Mammary epithelial cell (primary cell): ENCODE measurements at regions of chr11 and their contacts with region 1.

Region 1: GRCh38 chr11:66480117-66480938 is at the start of gene DPP3:
- DNase-seq: peak; percentile 97
- H3K4me3 ChIP-seq: peak within 1 kb of the TSS; percentile 52 to 75 (median 68)
- H3K27ac ChIP-seq: peak within 1 kb of the TSS; percentile 83
- H3K4me1 ChIP-seq: peaks cover 10% of the 10 kb centered on the region
- H3K27me3 ChIP-seq: no peaks in the 10 kb centered on the region
- CTCF ChIP-seq: no peak
- total RNA-seq, gene DPP3: 54.3 to 59.8 TPM

Region 2: DNA sequence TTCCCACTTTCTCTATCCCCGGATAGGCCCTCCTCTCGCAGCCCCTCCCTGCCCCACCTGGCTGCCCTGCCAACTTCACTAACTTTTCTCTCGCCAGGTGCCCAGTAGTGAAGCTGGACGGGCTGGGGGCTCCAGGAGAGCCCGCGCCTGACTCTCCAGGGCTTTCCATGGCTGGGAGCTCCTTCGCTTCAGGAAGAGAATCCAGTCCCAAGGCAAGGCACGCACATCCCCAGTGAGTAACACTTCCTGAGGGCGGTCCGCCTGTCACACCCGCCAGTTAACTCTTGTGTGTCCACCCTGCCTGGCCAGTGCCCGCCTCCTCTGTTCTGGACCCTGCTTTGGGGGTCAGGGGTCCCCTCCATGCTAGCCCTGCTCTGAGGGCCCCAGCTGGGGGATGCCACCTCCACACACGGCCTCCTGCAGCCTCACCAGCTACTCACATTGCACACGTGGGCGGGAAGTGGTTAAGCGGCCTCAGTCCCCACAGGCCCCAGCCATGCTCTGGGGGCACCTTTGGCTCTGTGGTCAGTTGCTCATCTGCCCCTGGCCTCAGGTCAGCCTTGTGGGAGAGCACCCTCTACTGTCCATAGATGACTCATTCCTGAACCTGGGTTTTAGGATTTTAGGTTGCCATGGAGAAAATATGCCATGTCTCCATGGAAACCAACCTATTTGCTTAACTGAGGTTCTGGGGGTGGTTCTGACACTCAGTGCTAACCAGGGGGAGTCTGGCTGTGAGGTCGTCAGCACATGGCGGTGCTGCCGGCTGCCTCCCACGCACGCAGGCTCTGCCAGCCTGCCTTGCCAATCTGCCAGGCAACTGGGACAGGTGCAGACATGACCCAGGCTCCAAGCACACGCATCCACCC is 143.9 kb before region 1 on chr11 and contains the start of gene RIN1:
- CTCF ChIA-PET with region 1: no interaction called
- dilution Hi-C with region 1: no loop called
- in situ Hi-C with region 1: no loop called
- intact Hi-C with region 1: loop called (anchors 5 kb)
- DNase-seq: peak; percentile 99
- H3K4me3 ChIP-seq: peak within 1 kb of the TSS; percentile 40 to 78 (median 70)
- H3K27ac ChIP-seq: peak within 1 kb of the TSS; percentile 87
- H3K4me1 ChIP-seq: peaks cover 52% of the 10 kb centered on the region
- H3K27me3 ChIP-seq: no peaks in the 10 kb centered on the region
- CTCF ChIP-seq: peak in 1 of 2 donors; percentile 19
- total RNA-seq, gene RIN1: 28.5 to 75.6 TPM

Region 3: DNA sequence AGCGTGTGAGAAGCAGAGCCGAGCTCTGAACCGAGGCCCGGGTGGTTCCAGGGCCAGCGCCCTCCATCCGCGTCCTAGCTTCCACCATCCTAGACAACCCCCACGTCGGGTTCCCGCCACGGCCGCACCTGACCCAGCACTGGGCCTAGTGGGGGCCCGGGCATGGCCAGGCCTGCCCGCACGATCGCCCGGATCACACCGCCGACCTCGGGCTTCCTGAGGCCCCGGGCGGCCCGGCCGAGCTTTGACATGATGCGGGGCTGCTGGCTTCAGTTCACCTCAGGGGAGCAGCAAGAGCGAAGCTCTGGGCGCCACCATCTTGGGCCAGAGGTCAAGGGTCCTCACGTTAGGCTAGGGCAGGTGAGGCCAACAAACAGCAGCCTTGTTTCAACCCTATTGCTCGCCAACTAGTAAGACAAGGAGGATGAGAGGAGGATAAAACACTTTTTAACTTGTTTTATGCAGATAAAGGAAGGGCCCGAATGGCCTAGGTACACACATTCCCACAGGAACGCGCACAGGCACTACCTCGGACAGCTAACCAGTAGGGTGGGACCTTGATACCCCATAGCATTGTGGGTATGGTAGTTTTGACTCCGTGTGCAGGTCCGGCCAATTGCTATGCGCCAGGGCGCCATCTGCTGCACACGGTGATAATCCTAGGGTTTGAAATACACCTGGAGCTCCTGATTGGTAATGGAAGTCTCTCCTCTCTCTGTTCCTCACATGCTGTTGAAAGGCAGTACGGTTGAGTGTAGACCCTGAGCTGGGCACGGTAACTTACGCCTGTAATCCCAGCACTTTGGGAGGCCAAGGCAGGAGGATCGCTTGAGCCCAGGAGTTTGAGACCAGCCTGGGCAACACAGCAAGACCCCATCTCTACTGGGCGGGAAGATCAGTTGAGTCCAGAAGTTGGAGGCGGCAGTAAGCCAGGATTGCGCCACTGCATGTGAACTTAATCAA is 41.5 kb before region 1 on chr11 and contains the start of gene MRPL11:
- CTCF ChIA-PET with region 1: interaction called, 4 read pairs
- dilution Hi-C with region 1: no loop called
- in situ Hi-C with region 1: no loop called
- intact Hi-C with region 1: loop called (anchors 2 kb)
- DNase-seq: peak; percentile 90
- H3K4me3 ChIP-seq: peak within 1 kb of the TSS; percentile 53 to 87 (median 80)
- H3K27ac ChIP-seq: peak within 1 kb of the TSS; percentile 64
- H3K4me1 ChIP-seq: peaks cover 7% of the 10 kb centered on the region
- H3K27me3 ChIP-seq: no peaks in the 10 kb centered on the region
- CTCF ChIP-seq: peak; percentile 60 to 74
- total RNA-seq, gene MRPL11: 19.8 to 47.6 TPM

Region 4: GRCh38 chr11:66510271-66510989 is 30.1 kb after region 1 on chr11 and contains the start of gene BBS1:
- CTCF ChIA-PET with region 1: no interaction called
- dilution Hi-C with region 1: no loop called
- in situ Hi-C with region 1: no loop called
- intact Hi-C with region 1: loop called (anchors 2 kb)
- DNase-seq: peak; percentile 69
- H3K4me3 ChIP-seq: peak within 1 kb of the TSS; percentile 67 to 84 (median 71)
- H3K27ac ChIP-seq: peak within 1 kb of the TSS; percentile 34
- H3K4me1 ChIP-seq: peaks cover 4% of the 10 kb centered on the region
- H3K27me3 ChIP-seq: no peaks in the 10 kb centered on the region
- CTCF ChIP-seq: no peak
- total RNA-seq, gene BBS1: 20.3 to 44.2 TPM

Region 5: DNA sequence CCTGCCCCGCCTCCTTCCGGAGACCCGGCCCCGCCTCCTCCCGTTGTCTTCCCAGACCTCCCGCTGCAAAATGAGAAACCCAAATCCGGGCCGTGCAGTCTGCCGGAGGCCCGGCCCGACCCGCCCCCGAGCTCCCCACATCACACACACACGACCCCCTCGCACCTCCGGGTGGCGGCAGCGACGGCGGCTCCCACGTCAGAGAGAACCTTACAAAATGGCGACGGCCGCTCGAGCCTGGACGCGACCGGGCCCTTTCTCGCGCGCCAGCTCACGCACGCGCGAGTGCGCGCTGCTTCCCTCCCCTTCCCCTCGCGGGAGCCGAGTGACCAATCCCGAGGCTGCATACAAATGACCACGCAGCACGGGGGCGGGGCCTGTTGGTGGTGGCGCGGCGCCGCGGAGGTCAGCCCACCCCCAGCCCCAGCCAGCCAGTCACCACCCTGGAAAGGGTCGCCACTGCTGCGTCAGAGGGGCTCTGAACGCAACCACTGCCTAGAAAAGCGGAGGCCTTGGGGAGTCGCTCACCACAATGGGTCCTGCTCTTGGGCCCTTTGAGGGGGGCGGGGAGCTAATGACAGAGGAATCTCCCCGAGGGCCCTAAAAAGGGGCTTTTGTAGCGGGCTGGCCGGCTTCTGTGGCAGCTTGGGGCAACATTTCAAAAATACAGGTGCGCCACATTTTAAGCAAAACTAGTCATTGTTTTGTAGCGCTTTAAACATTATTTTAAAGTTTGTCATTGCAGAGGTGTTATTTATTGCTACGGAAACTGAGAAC is 197.5 kb after region 1 on chr11 and contains the start of gene RBM4B:
- CTCF ChIA-PET with region 1: interaction called, 4 read pairs
- dilution Hi-C with region 1: no loop called
- in situ Hi-C with region 1: no loop called
- intact Hi-C with region 1: loop called (anchors 1 kb)
- DNase-seq: peak; percentile 89
- H3K4me3 ChIP-seq: peak within 1 kb of the TSS; percentile 51 to 84 (median 75)
- H3K27ac ChIP-seq: peak within 1 kb of the TSS; percentile 93
- H3K4me1 ChIP-seq: peaks cover 18% of the 10 kb centered on the region
- H3K27me3 ChIP-seq: no peaks in the 10 kb centered on the region
- CTCF ChIP-seq: no peak
- total RNA-seq, gene RBM4B: 12.2 to 15.3 TPM